ENCODE measurements at regions of chr9 and their contacts with region 1.

Region 1: DNA sequence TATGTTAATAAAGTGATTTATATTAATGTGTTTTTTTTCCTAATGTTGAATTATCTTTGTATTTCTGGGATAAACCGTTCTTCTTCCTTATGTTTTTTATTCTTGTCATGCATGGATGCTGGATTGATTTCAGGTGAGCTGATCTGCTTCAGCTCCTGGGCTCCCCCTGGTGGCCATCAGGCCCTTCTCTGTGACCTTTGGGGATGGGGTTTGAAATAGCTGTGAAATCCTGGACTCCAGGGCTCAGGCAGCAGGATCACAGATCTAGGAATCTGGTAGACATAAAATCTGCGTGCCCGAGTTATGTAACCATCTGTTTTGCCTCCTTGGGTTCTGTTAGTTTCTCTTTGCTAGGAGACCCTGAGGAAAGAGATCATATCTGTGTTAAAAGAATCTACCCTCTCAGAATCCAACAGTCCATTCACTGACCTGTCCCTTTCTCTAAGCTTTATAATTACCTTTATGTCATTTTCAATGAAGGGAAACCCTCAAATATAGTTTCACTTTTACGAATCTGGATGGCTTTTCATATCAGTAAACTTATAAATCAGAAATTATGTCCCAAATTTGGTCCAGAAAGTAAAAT is 12.2 kb upstream of the OR13J1 start:
- DNase-seq: peak; percentile 84 to 87
- H3K4me3 ChIP-seq: no peak overlapping the region
- H3K27ac ChIP-seq: no peak overlapping the region
- H3K4me1 ChIP-seq: no peaks in the 10 kb centered on the region
- H3K27me3 ChIP-seq: no peaks in the 10 kb centered on the region
- CTCF ChIP-seq: peak; percentile 89 to 98 (median 92)
- POLR2A ChIP-seq: no peak

Region 2: GRCh38 chr9:35385042-35385441 is 497.3 kb before region 1 on chr9:
- intact Hi-C with region 1: loop called (anchors 10 kb)
- DNase-seq: no peak
- H3K4me3 ChIP-seq: no peak overlapping the region
- H3K27ac ChIP-seq: no peak overlapping the region
- H3K4me1 ChIP-seq: no peaks in the 10 kb centered on the region
- H3K27me3 ChIP-seq: no peaks in the 10 kb centered on the region
- CTCF ChIP-seq: no peak
- POLR2A ChIP-seq: no peak

Region 3: DNA sequence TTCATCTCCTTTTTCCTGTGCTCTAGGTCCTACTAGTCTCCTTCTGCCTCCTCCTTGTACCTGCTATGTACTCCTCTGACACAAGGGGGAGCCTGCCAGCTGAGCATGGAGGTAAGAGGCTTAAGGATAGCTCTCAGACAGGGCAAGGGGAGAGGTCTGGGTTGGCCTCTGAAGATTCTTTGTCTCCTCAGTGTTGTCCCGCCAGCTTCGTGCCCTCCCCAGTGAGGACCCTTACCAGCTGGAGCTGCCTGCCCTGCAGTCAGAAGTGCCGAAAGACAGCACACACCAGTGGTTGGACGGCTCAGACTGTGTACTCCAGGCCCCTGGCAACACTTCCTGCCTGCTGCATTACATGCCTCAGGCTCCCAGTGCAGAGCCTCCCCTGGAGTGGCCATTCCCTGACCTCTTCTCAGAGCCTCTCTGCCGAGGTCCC is 146.1 kb before region 1 on chr9:
- intact Hi-C with region 1: no loop called
- DNase-seq: peak in 1 of 2 donors; percentile 65
- H3K4me3 ChIP-seq: no peak overlapping the region
- H3K27ac ChIP-seq: peak overlapping the region in 1 of 2 donors; percentile 10
- H3K4me1 ChIP-seq: peaks cover 0 to 8% of the 10 kb centered on the region in 2 donors
- H3K27me3 ChIP-seq: no peaks in the 10 kb centered on the region
- CTCF ChIP-seq: peak; percentile 54 to 82 (median 67)
- POLR2A ChIP-seq: no peak

Region 4: DNA sequence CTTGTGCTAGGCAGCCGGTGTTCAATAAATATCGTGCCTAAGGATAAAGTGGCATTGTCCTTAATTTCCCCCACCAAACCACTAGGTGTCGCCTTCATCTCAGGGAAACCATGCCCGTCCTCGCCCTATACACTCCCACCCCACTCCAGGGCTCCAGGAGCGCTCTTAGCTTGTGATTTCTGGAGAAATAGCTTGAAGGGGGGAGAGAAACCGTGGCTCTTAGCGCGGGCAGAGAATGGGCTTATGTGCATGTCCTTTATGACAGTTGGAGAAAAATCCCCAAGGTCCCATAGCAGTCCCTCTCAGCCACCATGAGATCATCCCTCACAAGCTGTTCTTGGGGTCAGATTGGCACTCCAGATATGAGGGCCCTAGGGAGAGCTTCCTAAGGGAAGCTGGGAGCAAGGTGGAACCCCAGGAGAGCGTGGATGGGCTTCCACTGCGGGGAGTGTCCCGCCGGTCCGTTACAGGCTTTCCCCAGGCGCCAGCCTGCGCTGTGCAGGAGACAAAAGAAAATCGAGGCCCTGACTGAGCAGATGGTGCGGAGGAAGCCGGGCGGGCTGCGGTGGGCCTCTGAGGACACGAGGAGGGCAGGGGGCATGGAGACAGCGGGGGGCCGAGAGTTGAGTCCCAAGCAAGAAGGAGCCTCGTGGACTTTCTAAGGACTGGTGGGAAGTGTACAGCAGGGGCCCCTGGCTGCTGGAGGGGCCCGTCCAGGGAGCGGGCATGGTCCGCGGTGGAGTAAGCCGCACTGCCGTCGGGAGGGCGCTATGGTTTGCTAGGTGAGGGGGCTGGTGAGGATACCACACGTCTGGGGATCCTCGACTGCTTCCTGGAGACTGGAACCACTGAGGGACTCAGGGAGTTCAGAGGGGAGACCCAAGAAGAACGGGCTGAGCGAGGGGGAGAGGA is 91.7 kb before region 1 on chr9:
- intact Hi-C with region 1: loop called (anchors 5 kb)
- DNase-seq: peak; percentile 77 to 86
- H3K4me3 ChIP-seq: peak overlapping the region; percentile 47 to 63
- H3K27ac ChIP-seq: peak overlapping the region; percentile 81 to 91
- H3K4me1 ChIP-seq: peaks cover 12 to 22% of the 10 kb centered on the region in 2 donors
- H3K27me3 ChIP-seq: no peaks in the 10 kb centered on the region
- CTCF ChIP-seq: peak; percentile 85 to 93 (median 88)
- POLR2A ChIP-seq: no peak

Region 5: GRCh38 chr9:36166101-36166927 is 284.0 kb after region 1 on chr9:
- intact Hi-C with region 1: no loop called
- DNase-seq: peak; percentile 84 to 93
- H3K4me3 ChIP-seq: peak overlapping the region; percentile 44 to 49
- H3K27ac ChIP-seq: peak overlapping the region; percentile 86 to 96
- H3K4me1 ChIP-seq: peaks cover 0 to 15% of the 10 kb centered on the region in 2 donors
- H3K27me3 ChIP-seq: no peaks in the 10 kb centered on the region
- CTCF ChIP-seq: peak; percentile 84 to 96 (median 94)
- POLR2A ChIP-seq: peak; percentile 17 to 34